ENCODE measurements at regions of chr5 and their contacts with region 1.

Region 1: GRCh38 chr5:83564069-83564749 is 92.7 kb downstream of the VCAN start:
- DNase-seq: peak; percentile 18 to 44
- ATAC-seq: peak; percentile 66 to 81; a peak in 4 of 6 replicates
- H3K4me3 ChIP-seq: no peak overlapping the region
- H3K27ac ChIP-seq: peak overlapping the region; percentile 53 to 54; a peak in 5 of 6 replicates
- H3K4me1 ChIP-seq: peaks cover 27% of the 10 kb centered on the region
- CTCF ChIP-seq: peak; percentile 78
- EP300 ChIP-seq: no peak
- POLR2A ChIP-seq: no peak
- RAD21 ChIP-seq: peak; percentile 70 to 86

Region 2: DNA sequence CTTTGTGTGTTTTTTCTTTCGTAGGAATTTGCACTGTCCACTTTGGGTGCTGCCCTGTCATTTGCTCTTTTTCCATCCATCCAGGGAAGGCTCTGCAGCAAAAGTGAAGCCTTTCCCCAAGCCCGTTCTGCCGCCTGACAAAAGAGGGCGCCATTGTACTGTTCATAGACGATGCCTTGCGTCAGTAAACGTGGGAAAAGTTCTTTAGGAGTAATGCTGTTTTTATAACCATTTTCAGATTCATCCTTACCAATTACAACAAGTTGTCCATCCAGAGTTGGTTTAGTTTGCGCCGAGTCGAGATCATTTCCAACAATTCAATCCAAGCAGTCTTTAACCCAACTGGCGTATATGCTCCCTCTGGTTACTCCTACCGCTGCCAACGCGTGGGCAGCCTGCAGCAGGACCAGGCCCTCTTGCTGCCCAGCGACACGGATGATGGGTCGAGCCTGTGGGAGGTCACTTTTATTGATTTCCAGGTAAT is 1251.8 kb before region 1 on chr5:
- CTCF ChIA-PET with region 1: interaction called, 20 read pairs
- POLR2A ChIA-PET with region 1: no interaction called
- DNase-seq: peak; percentile 40 to 69
- ATAC-seq: peak; percentile 87 to 95
- H3K4me3 ChIP-seq: no peak overlapping the region
- H3K27ac ChIP-seq: no peak overlapping the region
- H3K4me1 ChIP-seq: no peaks in the 10 kb centered on the region
- CTCF ChIP-seq: peak; percentile 75
- EP300 ChIP-seq: no peak
- POLR2A ChIP-seq: no peak
- RAD21 ChIP-seq: peak; percentile 85 to 92

Region 3: DNA sequence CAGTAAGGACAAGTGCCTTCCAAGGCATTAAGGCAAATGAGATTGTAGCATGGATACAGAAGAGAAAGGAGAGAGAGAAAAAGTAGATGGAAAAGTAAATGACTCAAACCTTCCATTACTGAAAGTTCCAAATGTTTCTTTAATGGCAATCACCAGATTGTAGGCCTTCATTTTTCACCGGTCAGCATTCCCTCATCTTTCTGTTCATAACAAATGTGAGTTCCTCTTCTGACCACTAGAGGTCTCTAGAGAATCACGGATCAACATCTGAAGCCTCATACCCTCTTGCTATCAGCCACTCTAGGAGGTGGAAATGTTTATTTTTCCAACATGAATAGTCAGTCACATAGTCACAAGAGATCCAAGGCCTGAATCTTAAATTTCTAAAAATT is 1212.5 kb before region 1 on chr5:
- CTCF ChIA-PET with region 1: interaction called, 36 read pairs
- POLR2A ChIA-PET with region 1: no interaction called
- DNase-seq: peak; percentile 55 to 60
- ATAC-seq: peak; percentile 86 to 94
- H3K4me3 ChIP-seq: no peak overlapping the region
- H3K27ac ChIP-seq: peak overlapping the region in 1 of 2 experiments; percentile 36; a peak in 3 of 6 replicates
- H3K4me1 ChIP-seq: peaks cover 7% of the 10 kb centered on the region; the same call in 1 of the 3 replicates
- CTCF ChIP-seq: peak; percentile 89
- EP300 ChIP-seq: no peak
- POLR2A ChIP-seq: no peak
- RAD21 ChIP-seq: peak; percentile 89 to 91

Region 4: GRCh38 chr5:83553000-83553486 is 11.2 kb before region 1 on chr5:
- CTCF ChIA-PET with region 1: interaction called, 16 read pairs
- POLR2A ChIA-PET with region 1: no interaction called
- DNase-seq: peak in 1 of 2 experiments; percentile 43
- ATAC-seq: peak in 1 of 2 experiments; percentile 47; a peak in 1 of 6 replicates
- H3K4me3 ChIP-seq: no peak overlapping the region
- H3K27ac ChIP-seq: peak overlapping the region; percentile 14 to 54; a peak in 3 of 6 replicates
- H3K4me1 ChIP-seq: peaks cover 29% of the 10 kb centered on the region
- CTCF ChIP-seq: no peak
- EP300 ChIP-seq: peak in 1 of 2 experiments; percentile 32; a peak in 1 of 5 replicates
- POLR2A ChIP-seq: no peak
- RAD21 ChIP-seq: no peak

Region 5: DNA sequence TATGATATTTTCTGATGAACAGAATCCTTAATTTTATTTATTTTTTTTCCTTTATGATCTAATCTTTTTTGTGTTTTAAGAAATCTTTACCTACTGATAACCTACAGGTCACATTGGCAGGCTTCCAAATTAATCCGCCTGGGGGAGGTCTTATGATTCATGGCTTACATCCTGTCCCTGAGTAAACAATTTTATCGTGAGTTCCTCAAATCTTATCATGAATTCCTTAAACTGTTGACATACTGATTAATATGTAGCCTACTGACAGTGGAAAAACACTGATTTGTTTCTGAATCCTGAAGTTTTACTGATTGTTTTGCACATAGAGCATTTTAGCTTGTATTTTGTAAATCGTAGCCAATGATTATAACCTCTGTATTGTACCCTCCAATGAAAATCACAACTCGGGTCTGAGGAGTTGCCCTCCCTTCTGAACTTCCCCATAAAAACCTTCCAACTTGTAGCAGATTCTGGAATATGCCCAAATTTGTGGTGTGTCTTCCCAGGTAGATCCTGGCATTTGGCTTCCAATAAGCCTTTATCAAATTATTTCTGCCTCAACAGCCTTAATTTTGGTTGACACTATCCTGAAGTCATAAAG is 12.9 kb after region 1 on chr5:
- CTCF ChIA-PET with region 1: no interaction called
- POLR2A ChIA-PET with region 1: no interaction called
- DNase-seq: peak; percentile 27 to 88
- ATAC-seq: peak; percentile 59 to 66; a peak in 4 of 6 replicates
- H3K4me3 ChIP-seq: no peak overlapping the region; the same call in 2 of the 3 replicates
- H3K27ac ChIP-seq: peak overlapping the region; percentile 65 to 74
- H3K4me1 ChIP-seq: peaks cover 9% of the 10 kb centered on the region; the same call in 1 of the 3 replicates
- CTCF ChIP-seq: no peak
- EP300 ChIP-seq: peak; percentile 58 to 74; a peak in 2 of 5 replicates
- POLR2A ChIP-seq: no peak
- RAD21 ChIP-seq: no peak

Measured in A549 (cell line).